Dendritic cell treated with granulocyte-macrophage colony-stimulating factor and Interleukin-4, amounts not matched to agents 40 ng/mL and 50 ng/mL, for 4 days (primary cell): ENCODE measurements at regions of chr21 and their contacts with region 1.

Region 1: GRCh38 chr21:25607151-25608043 is at the start of gene MRPL39:
- H3K4me3 Mint-ChIP-seq: peak within 1 kb of the TSS; percentile 89
- H3K27ac Mint-ChIP-seq: peak within 1 kb of the TSS; percentile 91
- H3K4me1 Mint-ChIP-seq: peaks cover 11% of the 10 kb centered on the region
- H3K27me3 Mint-ChIP-seq: no peaks in the 10 kb centered on the region

Region 2: GRCh38 chr21:25626757-25627156 is 19.4 kb after region 1 on chr21:
- intact Hi-C with region 1: no loop called
- H3K4me3 Mint-ChIP-seq: no peak overlapping the region
- H3K27ac Mint-ChIP-seq: no peak overlapping the region
- H3K4me1 Mint-ChIP-seq: no peaks in the 10 kb centered on the region
- H3K27me3 Mint-ChIP-seq: no peaks in the 10 kb centered on the region

Region 3: DNA sequence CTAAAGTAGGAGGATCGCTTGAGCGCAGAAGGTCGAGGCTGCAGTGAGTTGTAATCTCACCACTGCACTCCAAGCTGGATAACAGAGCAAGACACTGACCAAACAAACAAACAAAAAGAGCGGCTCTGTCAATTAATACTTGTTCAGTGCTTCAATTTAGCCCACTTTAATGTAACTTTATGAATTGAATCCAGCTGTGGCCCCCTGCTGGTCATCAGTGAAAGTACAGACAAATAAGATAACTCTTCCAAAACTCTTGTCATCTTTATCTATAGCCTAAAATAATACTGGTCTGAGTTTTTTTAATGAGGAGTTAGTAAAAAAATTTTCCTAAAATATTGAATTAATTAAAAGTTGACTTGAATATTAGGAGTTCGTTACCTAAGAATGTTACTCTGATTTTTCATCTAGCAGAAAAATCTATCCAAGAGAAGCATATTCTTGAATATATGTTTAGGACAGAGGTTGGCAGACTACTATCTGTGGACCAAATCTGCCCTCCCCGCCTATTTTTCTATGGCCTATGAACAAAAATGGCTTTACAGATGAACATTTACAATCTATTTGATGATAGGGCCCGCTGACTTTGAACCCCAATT is 101.2 kb after region 1 on chr21:
- intact Hi-C with region 1: loop called (anchors 1 kb)
- H3K4me3 Mint-ChIP-seq: no peak overlapping the region
- H3K27ac Mint-ChIP-seq: no peak overlapping the region
- H3K4me1 Mint-ChIP-seq: no peaks in the 10 kb centered on the region
- H3K27me3 Mint-ChIP-seq: no peaks in the 10 kb centered on the region

Region 4: DNA sequence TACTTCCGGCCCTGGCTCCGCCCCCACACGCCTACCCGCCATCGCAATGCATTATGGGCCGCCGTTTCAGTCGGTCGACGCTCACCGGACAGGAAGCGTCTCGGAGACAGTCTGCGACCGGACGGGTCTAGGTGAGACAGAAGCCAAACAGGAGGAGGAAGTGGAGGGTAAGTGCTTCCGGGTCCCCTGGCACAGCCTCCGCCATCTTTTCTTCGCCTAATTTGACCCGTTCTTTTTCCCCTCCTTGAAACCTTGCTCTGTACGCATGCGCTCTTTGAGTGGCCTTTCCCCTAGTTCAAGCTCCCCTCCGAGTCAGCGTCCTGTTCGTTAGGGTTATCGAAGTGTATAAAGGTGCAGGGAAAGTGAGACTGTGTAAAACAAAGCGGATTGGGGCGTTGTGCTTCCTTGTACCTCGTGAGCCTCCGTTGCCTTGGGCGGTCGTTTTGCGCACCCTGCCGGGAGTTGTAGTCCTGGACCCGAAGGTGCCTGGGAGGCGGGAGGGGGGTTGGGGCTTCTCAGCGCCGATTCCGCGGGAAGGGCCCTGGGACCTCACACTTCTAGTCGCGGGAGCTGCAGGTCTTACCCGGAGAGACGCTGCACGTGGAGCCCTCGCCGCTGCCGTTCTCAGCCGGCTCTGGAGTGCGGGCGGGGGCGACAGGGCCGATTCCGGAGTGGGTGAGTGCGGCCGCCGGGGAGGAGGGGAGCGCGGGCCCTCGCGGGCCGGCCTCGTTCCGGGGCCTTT is 127.7 kb after region 1 on chr21 and contains the starts of genes ATP5PF and GABPA:
- intact Hi-C with region 1: loop called (anchors 1 kb)
- H3K4me3 Mint-ChIP-seq: peak within 1 kb of the TSS; percentile 96
- H3K27ac Mint-ChIP-seq: peak within 1 kb of the TSS; percentile 100
- H3K4me1 Mint-ChIP-seq: peaks cover 35% of the 10 kb centered on the region
- H3K27me3 Mint-ChIP-seq: no peaks in the 10 kb centered on the region

Region 5: DNA sequence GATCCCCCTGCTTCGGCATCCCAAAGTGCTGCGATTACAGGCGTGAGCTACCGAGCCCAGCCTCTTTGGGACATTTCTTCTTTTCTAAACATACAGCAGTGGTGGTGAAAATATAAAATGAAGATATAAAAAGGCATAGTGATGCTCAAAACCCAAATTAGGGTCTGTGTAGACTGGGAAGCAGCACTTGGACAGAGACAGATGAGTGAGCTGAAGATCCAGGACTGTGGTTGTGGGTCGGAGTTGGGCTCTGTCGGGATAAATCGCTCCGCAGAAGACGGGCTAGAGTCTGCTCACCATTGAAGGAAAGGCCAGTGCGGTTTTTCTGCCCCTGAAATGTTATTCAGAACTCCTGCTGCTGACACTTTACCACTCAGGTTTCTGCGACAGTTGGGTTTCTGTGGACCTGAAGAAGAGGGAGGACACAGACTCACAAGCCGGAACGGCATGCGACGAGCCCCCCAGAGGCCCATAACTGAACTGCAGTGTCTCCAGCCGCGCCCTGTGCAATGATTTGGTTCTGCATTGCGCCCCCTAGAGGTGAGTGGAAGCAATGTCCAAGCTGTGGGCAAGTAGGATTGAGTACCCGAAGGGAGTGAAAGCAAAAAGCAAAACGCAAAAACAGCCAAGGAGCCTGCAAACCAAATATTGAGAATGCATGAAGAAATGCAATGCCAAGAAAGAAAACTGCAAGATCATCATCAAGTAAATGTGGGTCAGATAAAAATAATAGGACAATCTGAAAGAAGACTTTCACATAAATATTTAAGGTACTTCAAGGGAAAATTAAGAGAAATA is 194.0 kb after region 1 on chr21:
- intact Hi-C with region 1: loop called (anchors 1 kb)
- H3K4me3 Mint-ChIP-seq: peak overlapping the region; percentile 25
- H3K27ac Mint-ChIP-seq: no peak overlapping the region
- H3K4me1 Mint-ChIP-seq: peaks cover 9% of the 10 kb centered on the region
- H3K27me3 Mint-ChIP-seq: peaks cover 7% of the 10 kb centered on the region

Region 6: DNA sequence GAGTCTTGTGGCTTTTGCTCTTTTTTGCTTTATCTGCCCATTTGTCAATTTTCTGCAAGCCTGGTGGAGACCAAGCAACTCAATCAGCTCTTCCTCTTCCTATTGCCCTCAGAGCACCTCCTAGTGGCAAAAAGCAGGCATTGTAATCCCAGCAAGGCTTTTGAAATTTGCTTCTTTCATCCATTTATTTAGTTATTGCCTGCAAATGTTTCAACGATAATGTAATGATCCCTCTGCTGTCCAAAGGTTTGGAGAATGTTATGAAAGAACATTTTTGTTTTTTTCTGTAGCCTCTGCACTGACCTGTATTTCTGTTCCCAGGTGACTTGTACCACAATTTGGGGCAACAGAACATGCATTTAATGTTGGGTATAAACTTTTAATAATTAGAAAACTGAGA is 255.2 kb after region 1 on chr21:
- intact Hi-C with region 1: loop called (anchors 2 kb)
- H3K4me3 Mint-ChIP-seq: no peak overlapping the region
- H3K27ac Mint-ChIP-seq: no peak overlapping the region
- H3K4me1 Mint-ChIP-seq: no peaks in the 10 kb centered on the region
- H3K27me3 Mint-ChIP-seq: no peaks in the 10 kb centered on the region

Region 7: GRCh38 chr21:26170471-26171257 is 563.3 kb after region 1 on chr21 and contains the start of gene APP:
- intact Hi-C with region 1: loop called (anchors 10 kb)
- H3K4me3 Mint-ChIP-seq: peak within 1 kb of the TSS; percentile 92
- H3K27ac Mint-ChIP-seq: peak within 1 kb of the TSS; percentile 86
- H3K4me1 Mint-ChIP-seq: peaks cover 42% of the 10 kb centered on the region
- H3K27me3 Mint-ChIP-seq: peaks cover 14% of the 10 kb centered on the region

Region 8: GRCh38 chr21:26715878-26716506 is 1108.6 kb after region 1 on chr21:
- intact Hi-C with region 1: loop called (anchors 2 kb)
- H3K4me3 Mint-ChIP-seq: no peak overlapping the region
- H3K27ac Mint-ChIP-seq: no peak overlapping the region
- H3K4me1 Mint-ChIP-seq: no peaks in the 10 kb centered on the region
- H3K27me3 Mint-ChIP-seq: no peaks in the 10 kb centered on the region